Right cardiac atrium (tissue), 5 donors: ENCODE measurements at regions of chr15 and their contacts with region 1.

Region 1: GRCh38 chr15:81000624-81001151 is at the start of gene TLNRD1:
- DNase-seq: peak; percentile 93 to 95 (median 95)
- ATAC-seq: peak; percentile 84 to 88
- H3K4me3 ChIP-seq: peak within 1 kb of the TSS; percentile 87
- H3K27ac ChIP-seq: peak within 1 kb of the TSS; percentile 92
- H3K4me1 ChIP-seq: no peaks in the 10 kb centered on the region
- H3K27me3 ChIP-seq: no peaks in the 10 kb centered on the region
- total RNA-seq, gene TLNRD1: 6.7 to 17.2 (median 7.3) TPM

Region 2: GRCh38 chr15:80942746-80943555 is 57.7 kb before region 1 on chr15:
- intact Hi-C with region 1: no loop called
- DNase-seq: peak; percentile 42 to 75 (median 65)
- ATAC-seq: peak; percentile 77 to 85
- H3K4me3 ChIP-seq: no peak overlapping the region
- H3K27ac ChIP-seq: no peak overlapping the region
- H3K4me1 ChIP-seq: peaks cover 2% of the 10 kb centered on the region
- H3K27me3 ChIP-seq: no peaks in the 10 kb centered on the region

Region 3: DNA sequence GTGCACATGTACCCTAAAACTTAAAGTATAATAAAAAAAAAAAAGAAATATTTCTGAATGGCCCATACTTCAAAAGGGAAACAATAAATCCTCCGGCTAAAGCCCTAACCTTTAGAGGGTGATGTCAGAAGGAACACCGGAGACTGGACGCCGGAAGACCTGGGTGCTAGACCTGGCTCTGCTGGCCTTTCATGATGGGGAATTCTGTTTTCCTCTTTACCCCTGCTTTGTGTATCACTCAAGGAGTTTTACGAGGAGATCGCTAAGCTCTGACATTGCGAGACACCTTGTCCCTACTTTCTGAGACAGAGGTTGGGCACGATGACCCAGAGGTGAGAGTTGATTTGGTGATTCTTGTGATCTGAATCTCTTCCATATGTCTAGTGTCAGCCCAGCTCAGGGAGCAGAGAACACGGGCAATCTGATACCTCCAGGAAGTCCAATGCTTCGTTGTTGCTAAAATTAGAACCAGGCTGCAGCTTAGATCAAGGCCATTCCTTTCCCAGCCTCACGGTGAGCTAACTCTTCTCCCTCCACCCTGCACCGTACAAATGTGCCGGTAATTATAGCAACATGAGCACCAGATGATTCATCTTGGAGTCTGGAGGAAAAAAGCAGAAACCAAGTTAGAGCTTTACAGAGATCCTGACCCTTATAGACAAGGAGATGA is 91.3 kb after region 1 on chr15:
- intact Hi-C with region 1: loop called in 3 of 4 experiments (anchors 5 to 10 kb)
- DNase-seq: no peak
- ATAC-seq: peak; percentile 69 to 88
- H3K4me3 ChIP-seq: no peak overlapping the region
- H3K27ac ChIP-seq: peak overlapping the region; percentile 75
- H3K4me1 ChIP-seq: peaks cover 10% of the 10 kb centered on the region
- H3K27me3 ChIP-seq: no peaks in the 10 kb centered on the region

Region 4: DNA sequence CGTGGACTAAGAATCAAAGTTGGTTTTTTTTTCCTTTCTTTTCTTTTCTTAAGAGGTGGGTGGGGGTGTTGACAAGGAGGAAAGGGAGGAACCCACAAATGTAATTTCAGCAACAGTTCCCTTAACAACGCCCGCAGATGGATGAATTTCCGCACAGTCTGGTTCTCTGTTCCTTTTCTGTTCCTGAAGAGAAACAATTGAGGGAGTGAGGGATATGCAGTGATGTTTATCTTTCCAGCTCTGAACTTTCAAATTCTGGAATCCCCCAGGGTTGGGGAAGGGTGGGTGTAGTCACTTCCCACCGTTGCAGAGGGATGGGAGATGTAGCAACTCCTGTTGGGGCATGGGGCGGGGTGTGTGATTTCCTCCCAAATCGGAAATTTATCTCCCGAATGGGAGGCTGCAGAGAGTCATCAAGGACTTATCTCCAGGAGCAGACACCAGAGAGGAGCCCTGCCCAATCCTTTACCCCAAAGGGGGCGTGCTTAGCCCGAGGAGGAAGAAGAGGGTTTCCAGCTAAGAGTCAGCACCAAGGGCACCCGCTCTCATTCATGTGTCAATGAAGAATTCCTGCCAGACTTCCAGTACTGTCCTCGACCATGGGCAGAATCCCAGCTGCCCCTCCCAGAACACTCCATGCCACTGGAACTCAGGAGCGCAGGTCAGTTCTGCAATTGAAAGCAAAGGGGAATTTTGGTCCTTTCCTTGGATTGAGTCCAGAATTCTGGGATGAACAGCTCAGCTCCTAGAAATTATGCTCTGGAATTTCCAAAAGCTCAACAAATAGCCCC is 98.4 kb after region 1 on chr15:
- intact Hi-C with region 1: loop called (anchors 5 to 10 kb)
- DNase-seq: peak; percentile 72 to 82 (median 74)
- ATAC-seq: peak; percentile 86 to 95
- H3K4me3 ChIP-seq: no peak overlapping the region
- H3K27ac ChIP-seq: peak overlapping the region; percentile 8
- H3K4me1 ChIP-seq: peaks cover 10% of the 10 kb centered on the region
- H3K27me3 ChIP-seq: no peaks in the 10 kb centered on the region

Region 5: GRCh38 chr15:81480645-81481053 is 480.0 kb after region 1 on chr15:
- intact Hi-C with region 1: no loop called
- DNase-seq: peak in 1 of 3 donors; percentile 35
- ATAC-seq: peak; percentile 64 to 68
- H3K4me3 ChIP-seq: no peak overlapping the region
- H3K27ac ChIP-seq: no peak overlapping the region
- H3K4me1 ChIP-seq: no peaks in the 10 kb centered on the region
- H3K27me3 ChIP-seq: no peaks in the 10 kb centered on the region